AG04450 (cell line): ENCODE measurements at regions of chr6 and their contacts with region 1.

Region 1: DNA sequence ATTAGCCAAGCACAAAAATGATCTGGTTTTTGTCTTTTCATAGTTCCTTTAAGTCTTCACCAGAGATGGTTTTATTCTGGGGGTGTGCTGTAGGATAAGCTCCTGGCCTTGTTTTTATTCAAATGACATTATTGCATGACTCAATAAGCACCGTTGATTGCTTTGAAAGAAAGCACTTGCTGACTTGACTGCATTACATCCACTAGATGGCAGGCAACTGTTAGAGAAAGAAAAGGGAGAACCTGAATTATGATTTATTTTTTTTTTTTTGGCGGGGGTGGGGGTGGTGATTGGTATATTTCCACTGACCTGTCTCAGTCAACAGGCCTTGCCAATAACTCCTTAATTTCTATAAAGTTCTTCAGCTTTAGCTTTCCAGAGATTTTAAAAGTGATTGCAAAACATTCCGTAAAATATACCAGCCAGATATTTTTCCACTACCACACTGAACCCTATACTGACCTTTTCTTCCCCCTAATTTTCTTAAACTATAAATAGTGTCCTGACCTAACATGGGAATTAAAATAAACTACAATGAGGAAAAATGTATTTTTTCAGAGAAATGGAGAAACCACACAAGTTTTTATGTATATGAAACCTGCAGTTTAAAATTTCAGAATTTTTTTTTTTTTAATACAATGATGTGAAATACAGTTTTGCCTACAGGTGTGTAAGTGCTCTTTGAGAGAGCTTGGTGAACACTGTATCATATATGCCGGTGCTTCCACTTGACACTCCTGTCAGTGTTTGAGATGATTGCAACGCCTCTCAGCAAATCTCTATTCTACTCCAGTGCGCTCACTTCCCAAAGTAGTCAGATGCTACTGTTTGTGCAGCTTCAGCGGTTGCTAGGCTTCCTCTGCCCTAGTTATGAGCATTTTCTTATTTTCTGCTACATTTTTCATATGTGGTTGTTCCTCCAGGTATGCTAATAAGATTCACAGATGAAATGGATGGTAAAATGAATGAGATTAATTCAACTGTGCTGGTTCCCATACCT is 274.3 kb downstream of the CD109 start:
- DNase-seq: peak; percentile 13
- H3K4me3 ChIP-seq: no peak overlapping the region
- H3K27ac ChIP-seq: no peak overlapping the region
- H3K27me3 ChIP-seq: no peaks in the 10 kb centered on the region
- CTCF ChIP-seq: peak; percentile 80

Region 2: DNA sequence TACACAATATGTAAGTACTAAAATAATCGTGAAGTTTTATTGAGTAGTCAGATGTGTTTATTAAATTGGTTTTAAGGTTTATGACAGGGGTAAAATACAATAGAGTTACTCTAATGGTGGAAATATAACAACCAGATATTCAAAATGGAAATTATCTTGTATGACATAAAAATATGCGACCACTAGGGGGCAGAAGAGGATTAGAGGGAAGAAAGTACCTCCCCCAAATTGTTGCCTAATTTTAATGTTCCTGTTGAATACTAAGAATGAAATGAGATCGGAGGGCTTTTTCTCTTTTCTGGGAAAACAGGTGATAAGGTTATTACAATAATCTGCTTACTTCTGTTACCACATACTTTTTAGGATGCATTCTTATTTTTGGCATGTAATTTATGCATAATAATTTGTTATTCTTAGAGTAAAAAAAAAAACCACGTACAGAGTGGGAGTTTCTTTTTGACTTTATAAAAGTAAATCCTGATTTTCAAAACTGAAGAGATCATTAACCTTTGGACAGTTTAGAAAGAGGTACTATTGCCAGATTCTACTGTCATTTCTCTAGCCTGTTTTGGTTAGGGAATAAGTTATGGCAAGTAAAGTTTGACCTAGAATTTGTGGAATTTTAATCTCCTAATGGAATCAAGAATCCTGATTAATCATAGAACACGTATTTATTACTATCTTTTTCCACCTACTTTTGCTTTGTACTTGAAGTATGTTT is 115.1 kb before region 1 on chr6:
- CTCF ChIA-PET with region 1: interaction called, 11 read pairs
- POLR2A ChIA-PET with region 1: no interaction called
- DNase-seq: peak; percentile 48
- H3K4me3 ChIP-seq: no peak overlapping the region
- H3K27ac ChIP-seq: no peak overlapping the region
- H3K27me3 ChIP-seq: no peaks in the 10 kb centered on the region
- CTCF ChIP-seq: peak; percentile 73

Region 3: GRCh38 chr6:73985891-73986290 is 15.6 kb after region 1 on chr6:
- CTCF ChIA-PET with region 1: interaction called, 28 read pairs
- POLR2A ChIA-PET with region 1: no interaction called
- DNase-seq: no peak
- H3K4me3 ChIP-seq: no peak overlapping the region
- H3K27ac ChIP-seq: no peak overlapping the region
- H3K27me3 ChIP-seq: no peaks in the 10 kb centered on the region
- CTCF ChIP-seq: peak; percentile 23; the same call in 1 of the 2 replicates

Region 4: DNA sequence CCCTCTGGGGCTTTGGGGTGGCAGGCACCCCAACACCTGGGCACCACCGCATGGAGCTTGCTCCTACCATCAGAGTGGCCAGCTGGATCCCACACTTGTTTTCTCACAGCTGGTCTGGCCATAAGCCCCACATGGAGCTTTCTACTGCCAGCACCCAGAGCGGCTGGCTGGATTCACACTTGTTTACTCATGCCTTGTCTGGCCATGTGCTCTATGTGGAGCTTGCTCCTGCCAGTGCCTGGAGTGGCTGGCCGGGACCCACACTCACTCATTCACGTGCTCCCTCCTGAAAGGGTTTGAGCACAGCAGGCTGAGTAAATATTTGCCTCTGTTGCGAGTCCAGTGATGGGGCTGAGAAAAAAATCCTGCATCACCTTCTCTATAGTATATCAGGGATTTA is 212.7 kb after region 1 on chr6:
- CTCF ChIA-PET with region 1: no interaction called
- POLR2A ChIA-PET with region 1: no interaction called
- DNase-seq: no peak
- H3K4me3 ChIP-seq: no peak overlapping the region
- H3K27ac ChIP-seq: no peak overlapping the region
- H3K27me3 ChIP-seq: no peaks in the 10 kb centered on the region
- CTCF ChIP-seq: no peak